ENCODE measurements at regions of chr22 and their contacts with region 1.

Region 1: GRCh38 chr22:38353142-38353629 is 36.0 kb upstream of the CSNK1E start:
- DNase-seq: peak; percentile 79
- ATAC-seq: peak; percentile 79
- H3K4me3 Mint-ChIP-seq: no peak overlapping the region
- H3K27ac Mint-ChIP-seq: no peak overlapping the region
- H3K4me1 Mint-ChIP-seq: no peaks in the 10 kb centered on the region
- H3K27me3 Mint-ChIP-seq: no peaks in the 10 kb centered on the region

Region 2: GRCh38 chr22:38051900-38052862 is 301.0 kb before region 1 on chr22:
- CTCF ChIA-PET with region 1: interaction called, 8 read pairs
- POLR2A ChIA-PET with region 1: no interaction called
- intact Hi-C with region 1: loop called (anchors 1 kb)
- DNase-seq: peak; percentile 87
- ATAC-seq: peak; percentile 83
- H3K4me3 Mint-ChIP-seq: no peak overlapping the region
- H3K27ac Mint-ChIP-seq: no peak overlapping the region
- H3K4me1 Mint-ChIP-seq: peaks cover 7% of the 10 kb centered on the region
- H3K27me3 Mint-ChIP-seq: peaks cover 7% of the 10 kb centered on the region

Region 3: GRCh38 chr22:38104084-38104483 is 249.1 kb before region 1 on chr22:
- CTCF ChIA-PET with region 1: no interaction called
- POLR2A ChIA-PET with region 1: no interaction called
- intact Hi-C with region 1: loop called in 1 of 2 experiments (anchors 2 kb)
- DNase-seq: no peak
- ATAC-seq: no peak
- H3K4me3 Mint-ChIP-seq: no peak overlapping the region
- H3K27ac Mint-ChIP-seq: no peak overlapping the region
- H3K4me1 Mint-ChIP-seq: peaks cover 4% of the 10 kb centered on the region
- H3K27me3 Mint-ChIP-seq: no peaks in the 10 kb centered on the region

Region 4: DNA sequence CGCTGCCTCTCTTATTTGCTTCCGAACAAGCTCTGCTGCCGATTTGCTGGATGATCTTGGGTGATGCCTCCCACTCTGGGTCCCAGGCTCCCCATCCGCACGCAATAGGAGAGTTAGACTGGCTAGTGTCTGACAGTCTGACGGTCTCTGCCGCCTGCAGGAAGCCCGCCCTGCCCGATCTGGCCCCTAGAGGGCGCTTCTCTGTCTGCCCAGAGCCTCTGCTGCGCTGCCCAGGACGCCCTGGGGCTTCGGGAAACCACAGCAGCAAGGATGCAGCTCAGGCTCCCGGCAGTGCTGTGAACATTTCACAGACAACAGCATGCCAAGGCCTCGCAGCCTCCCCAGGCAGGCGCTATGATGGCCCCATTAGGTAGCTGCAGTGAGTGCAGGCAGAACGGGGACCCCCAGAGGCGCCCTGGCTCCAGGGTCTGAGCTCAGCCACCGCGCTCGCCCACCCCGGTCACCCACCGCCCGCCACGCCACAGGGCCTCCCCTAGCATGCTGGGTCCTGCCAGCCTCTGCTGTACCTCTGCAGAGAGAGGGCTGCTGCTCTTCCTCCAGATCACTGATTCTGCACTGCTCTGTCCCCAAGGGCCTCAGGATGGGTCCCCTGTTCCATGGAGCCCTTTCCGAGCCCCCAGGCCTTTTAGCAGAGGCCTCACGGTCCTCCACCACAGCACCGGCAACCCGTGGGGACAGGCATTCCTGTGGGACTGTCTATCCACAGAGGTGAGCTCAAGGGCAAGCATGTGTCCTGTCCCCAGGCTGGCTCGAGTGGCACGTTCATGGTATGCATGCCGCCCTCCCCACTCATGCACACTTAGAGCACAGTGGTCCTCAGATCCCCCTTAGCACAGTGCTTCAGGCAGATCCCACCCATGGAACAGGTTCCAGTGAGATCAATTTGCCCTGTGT is 238.4 kb before region 1 on chr22:
- CTCF ChIA-PET with region 1: no interaction called
- POLR2A ChIA-PET with region 1: no interaction called
- intact Hi-C with region 1: loop called in 1 of 2 experiments (anchors 1 kb)
- DNase-seq: peak; percentile 89
- ATAC-seq: peak; percentile 95
- H3K4me3 Mint-ChIP-seq: no peak overlapping the region
- H3K27ac Mint-ChIP-seq: no peak overlapping the region
- H3K4me1 Mint-ChIP-seq: no peaks in the 10 kb centered on the region
- H3K27me3 Mint-ChIP-seq: no peaks in the 10 kb centered on the region

Region 5: DNA sequence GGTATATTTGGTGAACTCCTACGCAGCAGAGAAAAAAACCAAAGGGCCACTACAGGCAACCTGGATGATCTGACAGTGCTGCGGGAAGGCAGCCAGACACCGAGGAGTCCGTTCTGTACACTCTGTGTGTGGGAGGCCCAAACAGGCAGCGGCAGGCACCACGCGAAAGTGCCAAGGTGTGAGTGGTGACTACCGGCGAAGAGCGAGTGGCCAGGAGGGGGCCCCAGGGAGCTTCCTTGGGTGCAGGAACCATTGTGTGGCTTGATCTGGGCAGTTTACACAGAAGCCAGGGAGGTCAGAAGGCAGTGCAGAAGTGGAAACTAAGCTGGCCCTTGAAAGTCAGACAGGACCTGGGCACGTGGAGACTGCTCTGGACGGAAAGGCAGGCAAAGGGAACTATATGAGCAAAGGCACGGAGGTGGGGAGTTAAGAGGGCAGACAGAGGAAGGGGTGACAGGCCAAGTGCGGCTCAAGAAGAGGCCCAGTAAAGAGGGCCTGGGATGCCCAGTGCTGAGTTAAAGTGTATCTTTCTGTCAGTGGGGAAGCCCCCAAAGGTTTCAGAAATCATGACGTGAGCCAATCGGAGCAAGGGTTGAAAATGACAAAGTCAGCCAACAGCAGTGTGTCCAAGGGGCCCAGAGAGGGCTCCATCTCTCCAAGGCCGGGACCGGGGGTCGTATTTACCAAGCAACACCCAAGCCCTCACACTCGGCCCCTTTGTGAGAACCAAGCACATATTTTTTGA is 91.0 kb before region 1 on chr22:
- CTCF ChIA-PET with region 1: interaction called, 4 read pairs
- POLR2A ChIA-PET with region 1: no interaction called
- intact Hi-C with region 1: loop called (anchors 1 to 10 kb)
- DNase-seq: peak; percentile 75
- ATAC-seq: peak; percentile 77
- H3K4me3 Mint-ChIP-seq: no peak overlapping the region
- H3K27ac Mint-ChIP-seq: peak overlapping the region; percentile 67
- H3K4me1 Mint-ChIP-seq: peaks cover 36% of the 10 kb centered on the region
- H3K27me3 Mint-ChIP-seq: no peaks in the 10 kb centered on the region

Region 6: DNA sequence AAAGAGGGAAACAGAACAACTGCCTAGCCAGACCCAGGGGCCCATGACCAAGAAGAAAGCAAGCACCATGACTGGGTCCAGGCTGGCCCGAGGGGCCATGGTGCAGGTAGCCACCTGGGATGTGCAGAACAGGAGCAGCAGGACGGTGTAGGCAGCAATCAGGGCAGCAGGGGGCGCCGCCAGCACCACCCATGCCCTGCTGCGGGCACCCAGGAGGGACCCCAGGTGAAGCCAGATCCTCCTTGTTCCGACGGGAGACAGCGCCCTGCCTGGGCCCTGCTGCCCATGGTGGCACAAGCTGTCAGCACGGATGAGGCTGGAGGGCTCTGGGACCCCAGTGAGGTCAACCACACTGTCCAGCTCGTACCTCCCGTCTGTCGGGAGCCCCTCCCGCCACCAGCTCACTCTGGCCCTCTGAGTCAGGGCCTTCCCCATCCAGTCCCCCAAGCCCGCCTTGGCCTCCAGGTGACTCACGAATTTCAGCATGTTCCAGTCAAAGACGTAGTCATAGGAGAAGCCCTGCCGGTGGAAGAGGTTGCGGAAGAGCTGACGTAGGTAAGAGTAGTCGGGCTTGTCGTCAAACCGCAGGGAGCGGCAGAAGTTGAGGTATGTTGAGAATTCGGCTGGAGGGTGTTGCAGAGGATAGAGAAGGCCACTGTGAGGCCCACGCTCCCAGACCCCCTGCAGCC is 54.7 kb before region 1 on chr22:
- CTCF ChIA-PET with region 1: no interaction called
- POLR2A ChIA-PET with region 1: no interaction called
- intact Hi-C with region 1: loop called (anchors 1 to 5 kb)
- DNase-seq: peak; percentile 70
- ATAC-seq: peak; percentile 82
- H3K4me3 Mint-ChIP-seq: no peak overlapping the region
- H3K27ac Mint-ChIP-seq: no peak overlapping the region
- H3K4me1 Mint-ChIP-seq: no peaks in the 10 kb centered on the region
- H3K27me3 Mint-ChIP-seq: no peaks in the 10 kb centered on the region

Measured in activated CD4-positive, alpha-beta T cell treated with anti-CD3 and anti-CD28 coated beads for 36 hours (primary cell).